Ascending aorta (tissue), 2 donors: ENCODE measurements at regions of chr3 and their contacts with region 1.

Region 1: GRCh38 chr3:141659821-141660613 is 78.1 kb upstream of the RNF7 start:
- DNase-seq: peak in 1 of 2 donors; percentile 76
- H3K4me3 ChIP-seq: peak overlapping the region; percentile 63 to 94
- H3K27ac ChIP-seq: peak overlapping the region; percentile 58 to 84
- H3K4me1 ChIP-seq: peaks cover 0 to 2% of the 10 kb centered on the region in 2 donors
- H3K27me3 ChIP-seq: no peaks in the 10 kb centered on the region
- CTCF ChIP-seq: no peak

Region 2: GRCh38 chr3:141460097-141460704 is 199.8 kb before region 1 on chr3:
- intact Hi-C with region 1: loop called (anchors 10 kb)
- DNase-seq: peak; percentile 51 to 94
- H3K4me3 ChIP-seq: no peak overlapping the region
- H3K27ac ChIP-seq: no peak overlapping the region
- H3K4me1 ChIP-seq: no peaks in the 10 kb centered on the region
- H3K27me3 ChIP-seq: no peaks in the 10 kb centered on the region
- CTCF ChIP-seq: peak; percentile 86 to 88 (median 88)

Region 3: GRCh38 chr3:141575879-141576743 is 83.9 kb before region 1 on chr3:
- intact Hi-C with region 1: loop called (anchors 5 kb)
- DNase-seq: no peak
- H3K4me3 ChIP-seq: peak overlapping the region in 1 of 2 donors; percentile 13
- H3K27ac ChIP-seq: no peak overlapping the region
- H3K4me1 ChIP-seq: no peaks in the 10 kb centered on the region
- H3K27me3 ChIP-seq: no peaks in the 10 kb centered on the region
- CTCF ChIP-seq: peak; percentile 25 to 59 (median 54)

Region 4: DNA sequence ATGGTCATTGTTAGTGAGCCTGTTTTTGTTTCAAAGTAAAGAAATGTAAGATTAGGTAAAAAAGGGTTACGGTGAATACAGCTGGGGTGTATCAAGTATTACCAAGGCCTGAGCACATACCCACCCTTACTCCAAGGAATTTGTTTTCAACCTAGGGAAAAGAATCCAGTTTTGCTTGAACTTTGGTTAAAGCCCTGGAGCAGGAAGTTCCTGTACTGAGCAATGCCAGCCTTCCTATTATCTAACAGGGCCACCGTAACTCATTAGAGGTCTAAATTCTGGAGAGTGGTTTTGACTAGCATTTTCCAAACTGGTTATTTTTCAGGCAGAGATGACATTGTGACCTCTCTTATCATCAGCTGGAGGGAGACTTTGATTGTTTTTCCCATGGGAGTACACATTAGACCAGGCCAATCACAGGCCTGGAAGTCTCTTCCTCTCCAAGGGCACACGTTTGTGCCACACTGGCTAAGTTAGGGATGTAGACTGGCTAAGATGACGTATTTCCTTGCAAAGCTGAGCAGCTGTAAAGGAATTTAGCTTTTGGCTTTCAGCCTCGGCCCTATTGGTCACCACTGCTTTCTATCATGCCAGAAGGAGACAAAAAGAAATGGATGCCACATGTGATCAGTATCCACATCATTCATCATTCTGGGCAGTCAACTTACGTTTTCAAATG is 50.7 kb after region 1 on chr3:
- intact Hi-C with region 1: loop called (anchors 2 kb)
- DNase-seq: peak; percentile 30 to 83
- H3K4me3 ChIP-seq: no peak overlapping the region
- H3K27ac ChIP-seq: peak overlapping the region; percentile 82 to 89
- H3K4me1 ChIP-seq: peaks cover 8 to 19% of the 10 kb centered on the region in 2 donors
- H3K27me3 ChIP-seq: no peaks in the 10 kb centered on the region
- CTCF ChIP-seq: no peak